BJ (cell line): ENCODE measurements at regions of chr1 and their contacts with region 1.

Region 1: DNA sequence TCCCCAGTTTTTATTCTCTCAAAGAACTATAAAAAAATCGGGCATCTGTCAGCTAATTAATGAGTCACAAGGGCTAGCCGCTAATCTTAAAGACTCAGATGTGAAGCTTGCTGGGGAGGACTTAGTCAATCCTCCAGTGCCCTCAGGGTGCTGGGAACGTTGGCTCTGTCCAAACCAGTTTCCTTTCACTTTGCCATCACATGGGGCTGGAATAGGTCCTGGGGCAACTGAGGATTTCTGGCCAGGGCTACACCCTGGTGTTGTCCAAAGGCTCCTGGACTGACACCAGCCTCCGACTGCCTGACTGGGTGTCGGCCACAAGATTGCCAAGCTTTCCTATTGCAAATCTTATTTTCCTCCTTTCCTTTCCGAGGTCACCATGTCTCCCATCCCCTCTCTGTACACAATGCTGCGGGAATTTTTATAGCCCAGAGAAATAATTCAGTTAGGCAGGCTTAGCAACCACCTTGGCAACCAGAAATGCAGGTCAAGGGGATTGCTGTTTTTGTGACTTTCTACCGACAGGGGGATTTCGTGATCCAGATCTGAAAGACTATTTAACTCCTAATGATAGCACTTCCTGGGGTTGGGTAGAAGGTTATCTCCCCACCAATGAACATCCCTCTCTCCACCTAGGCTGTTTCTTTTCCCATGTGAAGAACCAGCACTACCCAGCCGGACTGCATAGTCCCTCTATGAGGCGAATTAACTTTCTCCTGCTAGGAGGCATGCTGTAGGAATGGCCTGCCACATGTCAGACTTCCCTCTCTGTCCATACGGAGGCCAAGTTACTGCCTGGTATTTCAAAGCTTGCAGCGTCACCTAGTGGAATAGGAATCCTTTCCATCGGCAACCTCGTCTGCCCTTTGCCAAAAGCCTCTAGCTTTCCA is 29.9 kb upstream of the CTBS start:
- DNase-seq: peak; percentile 77
- H3K4me3 ChIP-seq: peak overlapping the region; percentile 43
- H3K27me3 ChIP-seq: no peaks in the 10 kb centered on the region
- CTCF ChIP-seq: peak; percentile 80

Region 2: DNA sequence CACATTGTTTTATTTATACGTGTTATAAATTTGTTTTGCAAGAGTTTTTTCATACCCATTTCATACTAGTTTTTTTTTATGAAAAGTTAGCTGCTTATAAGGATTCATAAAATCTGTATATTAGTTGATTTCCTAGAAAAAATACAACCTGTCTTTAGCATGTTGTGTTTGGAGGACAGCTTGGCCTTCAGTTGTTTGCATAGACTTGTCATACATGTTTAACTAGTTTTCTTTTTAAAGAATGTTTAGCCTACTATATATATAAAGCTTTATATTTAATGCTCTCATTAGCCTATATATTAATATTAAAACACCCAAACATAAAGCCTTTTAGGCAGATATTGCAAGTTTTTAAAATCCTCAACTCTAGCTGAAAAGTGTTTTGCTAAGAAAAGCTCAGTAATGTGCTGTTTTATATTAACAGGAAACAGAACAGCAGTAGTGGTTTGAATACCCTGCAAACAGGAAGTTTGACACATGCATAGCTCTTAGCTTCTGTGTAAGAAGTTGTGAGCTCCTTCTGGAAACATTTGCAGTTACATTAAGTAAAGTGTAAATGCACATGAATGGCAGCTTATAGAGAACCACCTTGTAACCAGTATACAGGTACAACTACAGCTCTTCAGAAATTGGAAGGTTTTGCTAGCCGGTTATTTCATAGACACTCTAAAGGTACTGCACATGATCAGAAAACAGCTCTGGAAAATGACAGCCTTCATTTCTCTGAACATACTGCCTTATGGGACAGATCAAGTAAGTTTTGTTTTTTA is 460.2 kb before region 1 on chr1 and contains the start of gene PRKACB:
- CTCF ChIA-PET with region 1: interaction called, 12 read pairs
- POLR2A ChIA-PET with region 1: no interaction called
- DNase-seq: no peak
- H3K4me3 ChIP-seq: no peak within 1 kb of the TSS
- H3K27me3 ChIP-seq: no peaks in the 10 kb centered on the region
- CTCF ChIP-seq: no peak
- polyA plus RNA-seq, gene PRKACB: 8.4 and 23.8 TPM in 2 replicates

Region 3: DNA sequence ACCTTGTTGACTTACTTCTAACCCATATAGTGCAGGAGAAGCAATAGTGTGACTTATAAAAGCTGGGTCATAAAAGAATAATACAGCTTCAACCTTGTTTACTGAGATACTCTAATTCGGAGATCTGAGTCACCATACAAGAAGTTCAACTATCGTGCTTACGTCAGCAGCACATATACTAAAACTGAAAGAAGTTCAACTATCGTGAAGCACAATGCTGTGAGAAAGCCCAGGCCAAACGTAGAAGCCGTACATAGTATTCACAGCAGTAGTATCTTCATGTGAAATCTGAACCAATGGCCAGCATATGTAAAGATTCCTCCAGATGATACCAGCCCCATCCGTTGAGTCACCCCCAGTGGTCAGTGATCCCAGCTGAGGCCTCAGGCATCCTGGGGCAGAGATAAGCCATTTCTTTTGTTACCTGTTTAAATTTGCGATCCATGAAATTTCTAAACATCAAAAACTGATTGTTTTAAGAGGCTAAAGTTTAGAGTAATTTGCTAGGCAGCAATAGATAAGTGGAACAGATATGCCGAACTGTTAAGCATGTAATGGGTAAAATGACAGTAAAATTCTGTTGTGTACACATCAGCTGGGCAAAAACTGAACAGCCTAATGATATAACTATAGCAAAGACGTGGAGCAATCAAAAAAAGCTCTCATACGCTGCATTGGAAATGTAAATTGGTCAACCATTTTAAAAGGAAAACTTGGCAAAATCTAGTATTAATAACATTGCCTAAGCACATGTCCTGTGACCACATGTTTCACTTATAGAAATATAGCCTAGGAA is 356.6 kb before region 1 on chr1:
- CTCF ChIA-PET with region 1: no interaction called
- POLR2A ChIA-PET with region 1: no interaction called
- DNase-seq: no peak
- H3K4me3 ChIP-seq: no peak overlapping the region
- H3K27me3 ChIP-seq: no peaks in the 10 kb centered on the region
- CTCF ChIP-seq: no peak

Region 4: GRCh38 chr1:84478876-84479868 is 125.0 kb before region 1 on chr1 and contains the start of gene RPF1:
- CTCF ChIA-PET with region 1: interaction called, 14 read pairs
- POLR2A ChIA-PET with region 1: no interaction called
- DNase-seq: peak; percentile 32
- H3K4me3 ChIP-seq: peak within 1 kb of the TSS; percentile 90
- H3K27me3 ChIP-seq: no peaks in the 10 kb centered on the region
- CTCF ChIP-seq: no peak
- polyA plus RNA-seq, gene RPF1: 17.1 and 31.1 TPM in 2 replicates

Region 5: DNA sequence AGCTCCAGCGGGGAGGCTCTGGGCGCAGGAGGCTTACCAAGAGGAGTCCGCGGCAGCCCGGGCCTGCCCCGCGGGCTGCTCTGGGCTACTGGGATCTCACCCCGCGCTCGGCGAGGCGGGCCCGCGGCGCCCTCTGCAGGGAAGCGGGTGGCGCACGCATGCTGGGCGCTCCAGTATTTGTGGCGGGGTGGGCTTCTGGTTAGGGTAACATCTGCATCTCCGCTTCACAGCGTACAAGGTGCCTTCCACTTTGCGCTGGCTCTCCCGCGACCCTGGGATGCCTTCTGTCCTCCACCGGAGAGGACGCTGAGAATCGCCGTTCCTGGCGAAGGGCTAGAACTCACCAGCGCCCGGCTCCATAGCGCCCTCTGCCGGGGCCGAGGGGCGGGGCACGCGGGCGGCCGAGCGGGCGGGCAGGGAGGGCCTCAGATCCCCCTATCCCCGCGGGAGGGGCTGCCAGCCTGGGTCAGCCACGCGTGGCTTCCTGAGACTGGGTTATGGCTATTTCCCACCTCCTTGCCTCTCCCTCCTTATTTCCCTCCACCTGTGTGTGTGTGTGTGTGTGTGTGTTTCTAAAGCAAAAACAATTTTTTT is 16.6 kb after region 1 on chr1:
- CTCF ChIA-PET with region 1: interaction called, 16 read pairs
- POLR2A ChIA-PET with region 1: no interaction called
- DNase-seq: no peak
- H3K4me3 ChIP-seq: peak overlapping the region; percentile 51
- H3K27me3 ChIP-seq: no peaks in the 10 kb centered on the region
- CTCF ChIP-seq: peak; percentile 70

Region 6: DNA sequence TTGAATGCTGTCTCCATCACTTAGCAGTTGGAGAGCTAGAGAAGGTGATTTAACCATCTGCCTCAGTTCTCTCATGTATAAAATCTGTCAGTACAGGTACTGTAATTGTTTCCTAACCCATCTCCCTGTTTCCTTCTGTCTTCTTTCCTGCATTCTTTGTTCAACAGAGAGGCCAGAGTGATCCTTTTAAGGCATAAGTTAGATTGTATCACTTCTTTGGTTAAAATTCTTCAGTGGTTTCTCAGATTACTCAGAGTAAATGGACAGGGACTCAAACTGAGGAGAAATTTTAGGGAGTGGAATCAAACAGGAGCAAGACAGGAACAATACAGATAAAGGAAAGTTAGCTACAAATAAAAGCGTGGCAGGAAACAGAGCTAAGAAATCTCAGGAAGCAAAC is 131.3 kb after region 1 on chr1:
- CTCF ChIA-PET with region 1: no interaction called
- POLR2A ChIA-PET with region 1: no interaction called
- DNase-seq: no peak
- H3K4me3 ChIP-seq: no peak overlapping the region
- H3K27me3 ChIP-seq: no peaks in the 10 kb centered on the region
- CTCF ChIP-seq: no peak

Region 7: GRCh38 chr1:84772428-84772943 is 168.3 kb after region 1 on chr1:
- CTCF ChIA-PET with region 1: interaction called, 23 read pairs
- POLR2A ChIA-PET with region 1: no interaction called
- DNase-seq: peak; percentile 18
- H3K4me3 ChIP-seq: no peak overlapping the region
- H3K27me3 ChIP-seq: no peaks in the 10 kb centered on the region; the same call in 1 of the 2 replicates
- CTCF ChIP-seq: peak; percentile 93